Gastrocnemius medialis (tissue), 4 donors: ENCODE measurements at regions of chr14 and their contacts with region 1.

Region 1: GRCh38 chr14:34018564-34019244 is 67.8 kb upstream of the EGLN3 start:
- DNase-seq: peak; percentile 45 to 68
- ATAC-seq: peak; percentile 74 to 81
- H3K4me3 ChIP-seq: peak overlapping the region; percentile 36 to 44 (median 40)
- H3K27ac ChIP-seq: peak overlapping the region; percentile 39 to 68 (median 56)
- H3K4me1 ChIP-seq: peaks cover 7 to 8% of the 10 kb centered on the region in 2 donors
- H3K27me3 ChIP-seq: no peaks in the 10 kb centered on the region
- CTCF ChIP-seq: no peak
- POLR2A ChIP-seq: peak; percentile 20 to 53

Region 2: DNA sequence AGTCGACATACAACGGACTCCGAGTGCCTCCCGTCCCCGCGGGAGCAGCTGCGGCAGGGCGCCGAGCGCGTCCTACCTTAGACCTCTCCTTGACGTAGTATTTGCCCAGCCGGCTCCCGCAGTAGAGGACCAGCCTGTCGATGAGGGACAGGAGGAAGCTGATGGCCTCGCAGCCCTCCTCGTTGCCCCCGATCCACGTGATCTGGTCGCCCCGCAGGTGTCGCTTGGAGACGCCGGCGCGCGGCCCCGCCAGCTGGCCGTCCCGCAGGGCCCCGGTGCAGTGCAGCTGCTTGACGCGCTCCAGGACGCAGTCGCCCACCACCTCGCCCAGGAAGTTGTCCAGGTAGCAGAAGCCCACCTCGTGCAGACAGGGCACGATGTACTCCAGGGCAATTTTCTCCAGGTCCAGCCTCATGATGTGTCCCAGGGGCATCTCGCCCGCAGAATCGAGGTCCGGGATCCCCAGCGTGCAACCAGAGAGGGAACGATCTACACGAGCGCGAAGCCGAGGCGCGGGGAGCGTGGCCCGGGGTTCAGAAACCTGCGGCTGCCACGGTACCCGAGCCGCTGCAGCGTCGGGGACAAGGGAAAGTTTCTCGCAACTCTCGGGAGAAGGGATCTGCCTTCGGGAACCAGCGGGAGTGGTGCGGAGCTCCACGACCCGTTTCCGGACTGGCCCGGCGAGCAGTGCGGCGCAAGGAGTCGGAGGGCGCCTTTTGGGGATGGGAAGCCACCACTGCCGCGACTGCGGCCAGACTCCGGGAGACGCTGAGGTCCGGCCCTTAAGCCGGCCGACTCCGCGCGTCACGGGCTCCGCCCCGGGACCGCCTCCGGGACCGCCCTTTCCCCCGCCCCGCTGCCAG is 68.2 kb before region 1 on chr14 and contains the start of gene EGLN3:
- in situ Hi-C with region 1: no loop called
- intact Hi-C with region 1: loop called (anchors 5 kb)
- DNase-seq: peak; percentile 78 to 86
- ATAC-seq: peak; percentile 91 to 92
- H3K4me3 ChIP-seq: peak within 1 kb of the TSS; percentile 81 to 91 (median 83)
- H3K27ac ChIP-seq: peak within 1 kb of the TSS; percentile 78 to 88 (median 82)
- H3K4me1 ChIP-seq: peaks cover 11 to 14% of the 10 kb centered on the region in 2 donors
- H3K27me3 ChIP-seq: no peaks in the 10 kb centered on the region
- CTCF ChIP-seq: no peak
- POLR2A ChIP-seq: peak; percentile 96 to 99
- total RNA-seq, gene EGLN3: 9.4 to 15.7 (median 13.5) TPM